Caco-2 (cell line): ENCODE measurements at regions of chr7 and their contacts with region 1.

Region 1: DNA sequence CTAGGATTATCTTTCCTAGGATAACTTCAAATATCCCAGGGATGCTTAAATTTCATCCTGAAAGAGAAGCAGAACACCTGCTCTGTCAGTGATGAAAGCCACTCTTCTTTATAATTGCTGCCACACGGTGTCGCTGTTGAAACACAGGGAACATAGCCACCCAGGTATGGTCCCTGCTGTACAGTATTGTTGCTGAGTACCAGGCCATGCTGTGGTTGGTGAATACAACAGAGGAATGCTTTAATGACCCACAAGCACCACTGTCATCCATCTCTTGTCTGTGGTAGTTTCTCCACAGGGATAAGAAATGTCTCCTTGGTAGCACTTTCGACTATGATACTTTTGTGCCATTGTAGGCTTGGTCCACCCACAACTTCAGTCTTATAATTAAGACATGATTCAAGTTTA is 70.6 kb upstream of the STARD3NL start:
- DNase-seq: peak; percentile 70 to 75
- H3K4me3 ChIP-seq: no peak overlapping the region
- H3K4me3 Mint-ChIP-seq: no peak overlapping the region
- H3K27ac Mint-ChIP-seq: no peak overlapping the region
- H3K4me1 ChIP-seq: no peaks in the 10 kb centered on the region
- H3K4me1 Mint-ChIP-seq: no peaks in the 10 kb centered on the region
- H3K27me3 ChIP-seq: no peaks in the 10 kb centered on the region
- H3K27me3 Mint-ChIP-seq: peaks cover 2% of the 10 kb centered on the region
- CTCF ChIP-seq: peak; percentile 75 to 84

Region 2: DNA sequence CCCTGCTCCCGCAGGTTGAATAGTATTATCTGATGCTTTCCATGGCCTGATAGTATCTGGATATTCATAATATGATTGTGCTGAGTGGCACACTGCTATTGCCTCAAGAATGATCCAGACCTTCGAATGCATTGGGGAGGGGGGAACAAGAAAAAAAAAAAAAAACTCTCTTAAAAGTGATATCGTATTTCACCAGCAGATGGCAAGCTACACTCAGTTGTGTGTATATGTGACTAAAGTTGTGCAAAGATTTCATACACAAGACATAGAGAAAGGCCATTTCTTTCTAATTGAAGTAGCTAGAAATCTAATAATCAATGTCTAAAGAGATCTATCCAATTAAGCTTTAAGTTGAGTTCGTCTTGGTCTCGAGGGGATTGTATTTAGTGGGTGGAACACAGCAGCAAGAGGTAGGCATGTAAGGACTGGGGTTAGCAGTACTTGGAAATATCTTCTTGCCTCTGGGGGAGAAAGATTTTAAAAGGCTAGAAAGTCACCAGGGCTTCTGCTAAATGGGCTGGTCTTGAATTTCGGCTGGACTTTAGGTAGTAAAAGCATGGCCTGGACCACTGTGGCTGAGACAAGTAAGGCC is 206.2 kb before region 1 on chr7:
- CTCF ChIA-PET with region 1: no interaction called
- POLR2A ChIA-PET with region 1: no interaction called
- intact Hi-C with region 1: loop called (anchors 1 kb)
- DNase-seq: peak in 1 of 2 experiments; percentile 27
- H3K4me3 ChIP-seq: no peak overlapping the region
- H3K4me3 Mint-ChIP-seq: no peak overlapping the region
- H3K27ac Mint-ChIP-seq: no peak overlapping the region
- H3K4me1 ChIP-seq: peaks cover 16% of the 10 kb centered on the region
- H3K4me1 Mint-ChIP-seq: peaks cover 6% of the 10 kb centered on the region
- H3K27me3 ChIP-seq: no peaks in the 10 kb centered on the region
- H3K27me3 Mint-ChIP-seq: no peaks in the 10 kb centered on the region
- CTCF ChIP-seq: peak; percentile 59 to 65

Region 3: GRCh38 chr7:37942934-37943610 is 164.4 kb before region 1 on chr7:
- CTCF ChIA-PET with region 1: no interaction called
- POLR2A ChIA-PET with region 1: no interaction called
- intact Hi-C with region 1: no loop called
- DNase-seq: peak; percentile 70 to 82
- H3K4me3 ChIP-seq: no peak overlapping the region
- H3K4me3 Mint-ChIP-seq: no peak overlapping the region
- H3K27ac Mint-ChIP-seq: no peak overlapping the region
- H3K4me1 ChIP-seq: peaks cover 14% of the 10 kb centered on the region
- H3K4me1 Mint-ChIP-seq: no peaks in the 10 kb centered on the region
- H3K27me3 ChIP-seq: no peaks in the 10 kb centered on the region
- H3K27me3 Mint-ChIP-seq: peaks cover 3% of the 10 kb centered on the region
- CTCF ChIP-seq: no peak

Region 4: DNA sequence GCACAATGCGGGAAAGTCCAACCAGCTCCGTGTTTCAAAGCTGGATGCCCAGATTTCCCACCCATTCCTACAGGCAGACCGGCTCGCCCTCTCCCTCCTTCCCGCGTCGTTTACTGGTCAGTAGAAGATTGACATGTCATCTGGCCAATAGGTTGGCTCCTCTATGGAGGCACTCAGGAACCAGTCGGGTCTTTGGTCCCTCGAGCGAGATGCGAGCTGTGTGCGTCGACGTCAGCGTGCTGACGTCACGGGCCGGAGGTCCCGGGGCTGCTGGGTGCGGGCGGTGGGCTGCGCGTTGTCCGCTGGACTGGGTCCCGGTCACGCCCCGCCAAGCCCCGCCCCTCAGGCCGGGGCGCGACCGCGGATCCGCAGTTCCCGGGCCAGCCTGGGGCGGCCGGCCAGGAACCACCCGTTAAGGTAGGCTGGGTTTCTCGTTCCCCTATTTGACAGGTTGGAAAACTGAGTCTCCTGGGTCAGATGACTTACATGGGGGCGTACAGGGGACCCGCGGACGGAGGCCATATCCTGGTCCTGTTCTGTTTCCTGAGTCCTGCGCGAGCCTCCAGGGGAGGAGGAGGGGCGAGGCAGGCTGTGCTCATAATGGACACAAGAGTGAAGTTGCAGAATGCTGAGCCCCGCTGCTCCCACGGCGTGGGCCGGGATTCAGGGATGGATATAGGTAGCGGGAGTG is 70.7 kb after region 1 on chr7 and contains the start of gene STARD3NL:
- CTCF ChIA-PET with region 1: no interaction called
- POLR2A ChIA-PET with region 1: no interaction called
- intact Hi-C with region 1: loop called (anchors 1 kb)
- DNase-seq: peak; percentile 98 to 100
- H3K4me3 ChIP-seq: peak within 1 kb of the TSS; percentile 76
- H3K4me3 Mint-ChIP-seq: peak within 1 kb of the TSS; percentile 94
- H3K27ac Mint-ChIP-seq: peak within 1 kb of the TSS; percentile 90
- H3K4me1 ChIP-seq: no peaks in the 10 kb centered on the region
- H3K4me1 Mint-ChIP-seq: peaks cover 7% of the 10 kb centered on the region
- H3K27me3 ChIP-seq: no peaks in the 10 kb centered on the region
- H3K27me3 Mint-ChIP-seq: peaks cover 2% of the 10 kb centered on the region
- CTCF ChIP-seq: no peak
- total RNA-seq, gene STARD3NL: 32.6 and 33.5 TPM in 2 replicates

Region 5: GRCh38 chr7:38222481-38223096 is 115.1 kb after region 1 on chr7:
- CTCF ChIA-PET with region 1: interaction called, 3 read pairs
- POLR2A ChIA-PET with region 1: no interaction called
- intact Hi-C with region 1: loop called (anchors 1 kb)
- DNase-seq: peak in 1 of 2 experiments; percentile 61
- H3K4me3 ChIP-seq: no peak overlapping the region
- H3K4me3 Mint-ChIP-seq: no peak overlapping the region
- H3K27ac Mint-ChIP-seq: no peak overlapping the region
- H3K4me1 ChIP-seq: no peaks in the 10 kb centered on the region
- H3K4me1 Mint-ChIP-seq: no peaks in the 10 kb centered on the region
- H3K27me3 ChIP-seq: no peaks in the 10 kb centered on the region
- H3K27me3 Mint-ChIP-seq: no peaks in the 10 kb centered on the region
- CTCF ChIP-seq: peak; percentile 85 to 87

Region 6: DNA sequence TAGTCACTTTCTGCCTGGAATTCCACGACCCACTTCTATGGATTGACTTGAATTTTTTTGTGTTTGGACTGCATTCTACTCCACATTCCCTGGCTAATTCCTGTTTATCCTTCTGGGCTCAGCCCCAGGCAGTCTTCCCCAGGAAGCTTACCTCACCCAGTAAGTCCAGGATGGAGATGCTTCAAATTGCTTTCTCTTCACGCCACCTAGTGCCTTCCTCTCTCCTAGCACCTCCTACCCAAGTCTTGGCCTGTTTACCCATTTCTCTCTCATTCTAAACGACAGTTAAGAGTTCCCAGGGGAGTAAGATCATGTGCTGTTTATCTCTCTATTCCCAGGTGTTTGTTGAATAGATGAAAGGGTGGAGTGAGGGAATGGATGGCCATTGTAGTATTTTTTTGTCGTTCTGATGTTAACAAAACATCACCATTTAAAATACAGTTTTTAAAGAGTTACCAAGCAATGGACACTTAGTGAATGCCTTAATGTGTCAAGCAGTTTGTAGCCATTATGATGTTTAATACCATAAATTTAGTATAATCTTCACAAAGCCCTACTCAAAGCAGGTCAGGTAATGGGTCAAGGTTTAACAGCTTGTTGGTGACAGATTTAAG is 211.4 kb after region 1 on chr7:
- CTCF ChIA-PET with region 1: interaction called, 6 read pairs
- POLR2A ChIA-PET with region 1: no interaction called
- intact Hi-C with region 1: loop called (anchors 1 kb)
- DNase-seq: peak; percentile 71
- H3K4me3 ChIP-seq: no peak overlapping the region
- H3K4me3 Mint-ChIP-seq: peak overlapping the region; percentile 21
- H3K27ac Mint-ChIP-seq: no peak overlapping the region
- H3K4me1 ChIP-seq: 0 out of 2 replicates have a peak, but pooled peaks cover 5% of the 10 kb centered on the region
- H3K4me1 Mint-ChIP-seq: peaks cover 11% of the 10 kb centered on the region
- H3K27me3 ChIP-seq: no peaks in the 10 kb centered on the region
- H3K27me3 Mint-ChIP-seq: peaks cover 8% of the 10 kb centered on the region
- CTCF ChIP-seq: peak; percentile 57 to 69

Region 7: DNA sequence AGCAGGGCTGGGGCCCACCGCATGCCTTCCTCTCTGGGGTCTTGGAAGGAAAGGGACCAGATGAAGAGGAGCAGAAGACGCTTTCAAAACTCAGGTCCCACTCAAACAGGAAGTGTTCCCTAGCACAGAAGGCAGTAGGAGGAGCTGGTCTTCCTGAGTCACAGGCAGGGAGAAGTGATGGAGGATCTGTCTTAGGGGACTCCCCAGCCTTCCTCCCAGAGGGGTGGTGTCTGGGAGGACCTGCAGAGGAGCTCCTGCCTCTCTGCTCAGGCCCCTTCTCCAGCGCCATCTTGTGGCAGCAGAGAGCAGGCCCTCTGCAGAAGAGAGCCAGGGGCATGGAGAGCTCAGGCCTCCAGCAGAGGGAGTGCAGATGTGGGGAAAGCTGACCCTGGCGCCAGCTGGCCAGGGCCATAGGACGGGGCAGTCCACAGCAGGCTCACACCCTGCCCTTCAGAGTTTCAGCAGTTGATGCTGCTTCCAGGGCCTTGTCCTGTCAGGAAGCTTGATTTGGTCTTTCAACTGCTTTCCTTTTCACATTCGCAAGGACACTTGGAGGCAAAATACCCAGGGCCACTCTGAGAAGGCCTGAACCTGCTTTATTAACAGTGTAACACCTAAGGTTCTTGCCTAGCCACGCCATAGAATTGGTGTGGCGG is 228.1 kb after region 1 on chr7:
- CTCF ChIA-PET with region 1: interaction called, 4 read pairs
- POLR2A ChIA-PET with region 1: no interaction called
- intact Hi-C with region 1: loop called (anchors 5 kb)
- DNase-seq: peak; percentile 86
- H3K4me3 ChIP-seq: no peak overlapping the region
- H3K4me3 Mint-ChIP-seq: peak overlapping the region; percentile 35
- H3K27ac Mint-ChIP-seq: peak overlapping the region; percentile 63
- H3K4me1 ChIP-seq: peaks cover 25% of the 10 kb centered on the region
- H3K4me1 Mint-ChIP-seq: peaks cover 21% of the 10 kb centered on the region
- H3K27me3 ChIP-seq: no peaks in the 10 kb centered on the region
- H3K27me3 Mint-ChIP-seq: no peaks in the 10 kb centered on the region
- CTCF ChIP-seq: peak; percentile 90 to 97

Region 8: GRCh38 chr7:38360776-38361175 is 253.3 kb after region 1 on chr7:
- CTCF ChIA-PET with region 1: no interaction called
- POLR2A ChIA-PET with region 1: no interaction called
- intact Hi-C with region 1: loop called (anchors 5 kb)
- DNase-seq: no peak
- H3K4me3 ChIP-seq: no peak overlapping the region
- H3K4me3 Mint-ChIP-seq: no peak overlapping the region
- H3K27ac Mint-ChIP-seq: no peak overlapping the region
- H3K4me1 ChIP-seq: no peaks in the 10 kb centered on the region
- H3K4me1 Mint-ChIP-seq: no peaks in the 10 kb centered on the region
- H3K27me3 ChIP-seq: no peaks in the 10 kb centered on the region
- H3K27me3 Mint-ChIP-seq: peaks cover under 1% of the 10 kb centered on the region
- CTCF ChIP-seq: no peak